Endothelial cell of umbilical vein (primary cell): ENCODE measurements at regions of chr2 and their contacts with region 1.

Region 1: DNA sequence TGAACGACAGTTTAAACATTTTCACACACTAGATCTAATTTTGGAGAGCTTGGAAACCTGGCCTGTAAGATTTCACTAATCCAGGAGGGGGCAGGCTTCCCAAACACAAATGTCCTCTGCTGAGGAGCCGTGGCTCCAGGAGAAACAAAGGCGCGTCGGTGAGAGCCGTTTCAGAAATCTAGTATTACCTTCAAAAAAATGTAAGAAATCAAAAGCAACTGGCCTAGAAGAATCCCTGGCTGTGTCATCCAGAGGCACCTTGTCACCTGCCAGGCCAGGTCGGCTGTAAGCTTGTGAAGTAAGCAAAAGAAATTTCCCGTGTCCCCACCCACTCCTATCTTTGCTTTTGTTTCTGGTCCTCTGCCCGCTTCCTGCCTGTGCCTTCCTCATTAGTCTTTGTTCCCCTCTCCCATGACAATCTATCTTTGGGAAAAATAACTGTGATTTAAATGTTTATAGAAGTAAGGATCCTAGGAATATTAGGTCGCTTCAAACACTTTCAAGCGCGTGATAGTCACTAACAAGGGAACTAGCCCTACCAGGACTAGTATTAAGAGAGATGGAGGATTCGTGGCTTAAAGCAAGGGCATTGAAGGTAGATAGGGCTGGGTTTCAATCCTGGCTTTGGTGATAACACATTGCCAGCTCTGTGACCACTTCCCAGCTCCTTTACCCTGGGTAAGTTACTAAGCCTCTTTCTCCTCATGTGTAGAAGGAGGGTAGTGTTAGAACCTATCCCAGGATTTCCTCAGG is 99.5 kb upstream of the STK39 start:
- DNase-seq: peak; percentile 74
- H3K4me3 ChIP-seq: peak overlapping the region; percentile 33 to 89 (median 88)
- H3K27ac ChIP-seq: no peak overlapping the region
- H3K4me1 ChIP-seq: peaks cover 12% of the 10 kb centered on the region
- H3K27me3 ChIP-seq: peaks cover 5 to 6% of the 10 kb centered on the region in 2 experiments
- CTCF ChIP-seq: peak; percentile 65 to 66
- POLR2A ChIP-seq: no peak

Region 2: GRCh38 chr2:167454036-167454435 is 892.9 kb before region 1 on chr2:
- CTCF ChIA-PET with region 1: no interaction called
- POLR2A ChIA-PET with region 1: interaction called, 12 read pairs
- dilution Hi-C with region 1: no loop called
- intact Hi-C with region 1: no loop called
- DNase-seq: no peak
- H3K4me3 ChIP-seq: no peak overlapping the region
- H3K27ac ChIP-seq: no peak overlapping the region
- H3K4me1 ChIP-seq: no peaks in the 10 kb centered on the region
- H3K27me3 ChIP-seq: no peaks in the 10 kb centered on the region
- CTCF ChIP-seq: no peak
- POLR2A ChIP-seq: no peak

Region 3: GRCh38 chr2:168455648-168456520 is 109.0 kb after region 1 on chr2 and contains the start of gene CERS6:
- CTCF ChIA-PET with region 1: no interaction called
- POLR2A ChIA-PET with region 1: no interaction called
- dilution Hi-C with region 1: no loop called
- intact Hi-C with region 1: loop called (anchors 1 kb)
- DNase-seq: peak; percentile 92
- H3K4me3 ChIP-seq: peak within 1 kb of the TSS; percentile 74 to 79 (median 78)
- H3K27ac ChIP-seq: peak within 1 kb of the TSS; percentile 38
- H3K4me1 ChIP-seq: peaks cover 10% of the 10 kb centered on the region
- H3K27me3 ChIP-seq: no peaks in the 10 kb centered on the region
- CTCF ChIP-seq: no peak
- POLR2A ChIP-seq: peak; percentile 82
- total RNA-seq, gene CERS6: 11.2 and 11.7 TPM in 2 replicates

Region 4: GRCh38 chr2:168705534-168706470 is 358.9 kb after region 1 on chr2:
- CTCF ChIA-PET with region 1: interaction called, 21 read pairs
- POLR2A ChIA-PET with region 1: no interaction called
- dilution Hi-C with region 1: no loop called
- intact Hi-C with region 1: loop called (anchors 1 kb)
- DNase-seq: peak; percentile 29
- H3K4me3 ChIP-seq: no peak overlapping the region
- H3K27ac ChIP-seq: no peak overlapping the region
- H3K4me1 ChIP-seq: no peaks in the 10 kb centered on the region
- H3K27me3 ChIP-seq: no peaks in the 10 kb centered on the region
- CTCF ChIP-seq: peak; percentile 24 to 36
- POLR2A ChIP-seq: no peak

Region 5: DNA sequence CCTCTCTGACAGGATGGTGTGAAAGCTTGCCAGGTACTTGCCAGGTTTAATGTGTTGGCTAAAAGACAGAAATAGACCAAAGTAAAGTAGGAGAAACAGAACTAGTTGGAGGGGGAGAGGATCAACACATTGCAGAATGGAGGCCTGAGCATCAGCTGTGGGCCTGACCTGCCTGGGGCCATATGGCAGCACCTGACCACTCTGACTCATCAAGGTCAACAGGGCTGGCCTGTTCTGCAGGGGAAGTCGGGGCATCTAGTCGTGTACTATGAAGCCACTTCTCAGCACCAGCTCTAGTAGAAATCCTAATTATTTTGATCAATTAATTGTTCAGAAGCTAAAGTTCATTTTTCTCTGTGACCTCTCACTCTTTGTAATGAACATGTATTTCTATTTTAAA is 419.7 kb after region 1 on chr2:
- CTCF ChIA-PET with region 1: interaction called, 15 read pairs
- POLR2A ChIA-PET with region 1: no interaction called
- dilution Hi-C with region 1: no loop called
- intact Hi-C with region 1: no loop called
- DNase-seq: no peak
- H3K4me3 ChIP-seq: no peak overlapping the region
- H3K27ac ChIP-seq: no peak overlapping the region
- H3K4me1 ChIP-seq: no peaks in the 10 kb centered on the region
- H3K27me3 ChIP-seq: no peaks in the 10 kb centered on the region
- CTCF ChIP-seq: no peak
- POLR2A ChIP-seq: no peak

Region 6: GRCh38 chr2:168920504-168921157 is 573.7 kb after region 1 on chr2:
- CTCF ChIA-PET with region 1: interaction called, 46 read pairs
- POLR2A ChIA-PET with region 1: no interaction called
- dilution Hi-C with region 1: no loop called
- intact Hi-C with region 1: loop called (anchors 1 kb)
- DNase-seq: peak; percentile 58
- H3K4me3 ChIP-seq: no peak overlapping the region
- H3K27ac ChIP-seq: no peak overlapping the region
- H3K4me1 ChIP-seq: no peaks in the 10 kb centered on the region
- H3K27me3 ChIP-seq: peaks cover 2 to 3% of the 10 kb centered on the region in 2 experiments
- CTCF ChIP-seq: peak; percentile 30 to 34
- POLR2A ChIP-seq: no peak

Region 7: GRCh38 chr2:169012812-169013627 is 666.1 kb after region 1 on chr2:
- CTCF ChIA-PET with region 1: no interaction called
- POLR2A ChIA-PET with region 1: no interaction called
- dilution Hi-C with region 1: no loop called
- intact Hi-C with region 1: no loop called
- DNase-seq: peak; percentile 88
- H3K4me3 ChIP-seq: no peak overlapping the region
- H3K27ac ChIP-seq: peak overlapping the region; percentile 88
- H3K4me1 ChIP-seq: peaks cover 28% of the 10 kb centered on the region
- H3K27me3 ChIP-seq: no peaks in the 10 kb centered on the region
- CTCF ChIP-seq: no peak
- POLR2A ChIP-seq: no peak